H1 (cell line): ENCODE measurements at regions of chr1 and their contacts with region 1.

Region 1: GRCh38 chr1:25037174-25038074 is 107.3 kb upstream of the RUNX3 start:
- DNase-seq: peak in 1 of 2 experiments; percentile 82
- H3K4me3 ChIP-seq: no peak overlapping the region
- H3K27ac ChIP-seq: no peak overlapping the region
- H3K4me1 ChIP-seq: peaks cover 0 to 3% (median under 1%) of the 10 kb centered on the region in 4 experiments; a peak in 2 of 7 replicates
- H3K27me3 ChIP-seq: no peaks in the 10 kb centered on the region
- CTCF ChIP-seq: peak; percentile 82 to 85 (median 83)
- EP300 ChIP-seq: no peak
- POLR2A ChIP-seq: no peak
- RAD21 ChIP-seq: peak; percentile 46 to 66

Region 2: DNA sequence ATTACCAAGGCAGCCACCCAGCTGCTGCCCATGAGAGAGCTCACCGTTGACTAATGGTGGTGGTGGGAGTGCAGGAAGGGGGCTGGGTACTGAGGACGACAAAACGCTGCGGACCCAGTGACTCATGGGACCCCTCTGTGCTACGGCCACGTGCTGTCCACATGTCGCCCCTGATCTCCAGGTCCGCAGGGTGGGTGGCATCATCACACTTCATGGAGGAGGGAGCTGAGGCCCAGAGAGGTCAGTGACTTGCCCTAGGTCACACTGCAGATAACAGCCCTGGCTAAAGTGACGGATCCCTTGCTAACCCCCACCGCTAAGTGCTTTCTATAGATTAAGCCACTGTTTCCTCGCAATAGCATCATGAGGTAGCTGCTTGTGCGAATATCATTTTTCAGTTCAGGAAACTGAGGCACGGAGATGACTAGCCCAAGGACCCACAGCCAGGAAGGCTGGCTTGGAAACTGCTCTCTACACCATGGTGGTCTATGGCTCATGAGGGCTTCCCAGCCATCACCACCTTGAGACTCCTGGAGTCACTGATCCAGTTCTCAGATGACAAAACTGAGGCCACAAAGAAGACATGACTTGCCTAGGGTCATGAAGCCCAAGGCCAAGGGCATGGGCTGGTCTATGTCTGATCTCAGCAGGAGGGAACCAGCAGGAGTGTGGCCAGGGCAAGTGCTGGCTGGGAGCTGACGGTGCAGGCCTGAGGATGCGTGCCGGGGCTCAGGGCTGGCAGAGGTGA is 119.9 kb before region 1 on chr1:
- CTCF ChIA-PET with region 1: no interaction called
- POLR2A ChIA-PET with region 1: no interaction called
- DNase-seq: no peak
- H3K4me3 ChIP-seq: no peak overlapping the region
- H3K27ac ChIP-seq: no peak overlapping the region
- H3K4me1 ChIP-seq: peaks cover 0 to 8% (median 4%) of the 10 kb centered on the region in 4 experiments; a peak in 4 of 7 replicates
- H3K27me3 ChIP-seq: no peaks in the 10 kb centered on the region
- CTCF ChIP-seq: no peak
- EP300 ChIP-seq: no peak
- POLR2A ChIP-seq: no peak
- RAD21 ChIP-seq: no peak

Region 3: DNA sequence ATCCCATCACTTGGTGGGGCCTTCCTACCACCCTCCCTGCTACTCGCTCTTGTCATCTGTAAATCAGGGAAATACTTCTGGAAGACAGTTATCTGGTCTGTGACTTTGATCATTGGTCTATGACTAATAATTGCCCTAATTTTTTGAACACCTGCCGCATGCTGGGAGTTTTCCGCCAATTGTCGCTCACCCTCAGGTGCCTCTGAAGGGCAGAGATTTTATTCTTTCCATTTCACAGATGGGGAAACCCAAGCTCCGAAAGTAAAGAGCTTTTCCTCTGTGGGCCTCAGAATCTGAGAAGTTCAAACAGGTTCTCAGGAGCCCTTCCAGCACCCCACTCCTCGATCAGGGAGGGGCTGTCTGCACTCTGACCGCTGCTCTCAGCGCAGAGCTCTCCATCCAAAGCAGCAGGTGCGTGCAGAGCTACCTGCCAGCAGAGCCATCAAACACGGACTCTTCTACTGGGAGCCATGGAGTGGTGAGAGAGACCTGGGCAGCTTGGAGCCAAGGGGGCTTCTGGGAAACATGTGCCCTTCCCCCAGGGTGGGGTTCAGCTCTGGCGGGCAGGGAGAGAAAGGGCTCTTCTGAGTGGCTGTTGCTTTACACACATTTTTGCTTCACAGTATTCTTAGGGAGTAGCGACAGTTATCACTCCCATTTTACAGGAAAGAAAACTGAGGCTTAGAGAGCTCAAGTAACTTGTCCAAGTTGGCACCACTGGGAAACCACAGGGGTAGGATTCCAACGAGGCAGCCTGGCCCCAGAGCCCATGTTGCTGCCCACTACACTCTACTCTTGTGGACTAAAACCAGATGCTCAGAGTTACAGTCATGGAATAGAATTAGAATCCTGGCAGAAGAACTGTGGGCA is 101.6 kb before region 1 on chr1:
- CTCF ChIA-PET with region 1: interaction called, 36 read pairs
- POLR2A ChIA-PET with region 1: no interaction called
- DNase-seq: no peak
- H3K4me3 ChIP-seq: peak overlapping the region in 1 of 4 experiments; percentile 44; a peak in 1 of 8 replicates
- H3K27ac ChIP-seq: no peak overlapping the region
- H3K4me1 ChIP-seq: peaks cover 2 to 49% (median 24%) of the 10 kb centered on the region in 4 experiments
- H3K27me3 ChIP-seq: peaks cover 27 to 52% (median 50%) of the 10 kb centered on the region in 4 experiments
- CTCF ChIP-seq: no peak
- EP300 ChIP-seq: no peak
- POLR2A ChIP-seq: no peak
- RAD21 ChIP-seq: no peak

Region 4: DNA sequence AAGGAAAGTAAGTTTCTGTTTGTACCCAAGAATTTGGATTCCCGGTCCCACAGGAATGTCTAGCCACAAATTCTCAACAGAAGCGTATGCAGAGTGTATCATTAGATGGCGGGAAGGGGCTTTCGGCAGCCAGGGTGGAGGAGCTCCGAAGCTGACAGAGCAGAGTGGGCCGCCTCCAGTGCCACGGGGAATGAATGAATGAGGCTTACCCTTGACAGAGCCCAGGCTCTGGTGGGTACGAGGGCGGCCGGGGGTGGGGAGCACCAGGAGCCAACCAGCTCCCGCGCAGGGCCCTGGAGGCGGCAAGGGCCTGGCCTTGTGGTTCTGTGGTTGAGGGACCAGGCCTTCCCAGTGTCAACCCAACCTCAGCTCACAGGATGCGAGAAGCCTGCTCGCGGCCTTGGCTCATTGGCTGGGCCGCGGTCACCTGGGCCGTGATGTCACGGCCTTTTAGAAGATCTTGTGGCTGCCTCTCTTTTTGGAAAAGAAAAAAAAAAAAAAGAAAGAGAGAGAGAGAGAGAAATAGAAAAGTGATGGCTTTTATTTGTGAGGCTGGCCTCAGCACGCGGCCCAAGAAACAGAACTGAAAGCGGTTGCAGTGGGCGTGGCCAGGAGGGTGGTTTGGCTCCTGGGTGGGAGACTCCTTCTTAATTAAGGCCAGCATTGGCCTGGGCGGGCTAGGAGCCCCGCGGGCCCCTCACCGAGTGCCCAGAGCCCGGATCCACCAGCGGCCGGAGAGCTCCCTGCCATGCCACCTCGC is 72.4 kb before region 1 on chr1:
- CTCF ChIA-PET with region 1: interaction called, 11 read pairs
- POLR2A ChIA-PET with region 1: no interaction called
- DNase-seq: no peak
- H3K4me3 ChIP-seq: no peak overlapping the region
- H3K27ac ChIP-seq: no peak overlapping the region
- H3K4me1 ChIP-seq: peaks cover 0 to 5% (median under 1%) of the 10 kb centered on the region in 4 experiments; a peak in 3 of 7 replicates
- H3K27me3 ChIP-seq: no peaks in the 10 kb centered on the region
- CTCF ChIP-seq: no peak
- EP300 ChIP-seq: no peak
- POLR2A ChIP-seq: no peak
- RAD21 ChIP-seq: no peak

Region 5: DNA sequence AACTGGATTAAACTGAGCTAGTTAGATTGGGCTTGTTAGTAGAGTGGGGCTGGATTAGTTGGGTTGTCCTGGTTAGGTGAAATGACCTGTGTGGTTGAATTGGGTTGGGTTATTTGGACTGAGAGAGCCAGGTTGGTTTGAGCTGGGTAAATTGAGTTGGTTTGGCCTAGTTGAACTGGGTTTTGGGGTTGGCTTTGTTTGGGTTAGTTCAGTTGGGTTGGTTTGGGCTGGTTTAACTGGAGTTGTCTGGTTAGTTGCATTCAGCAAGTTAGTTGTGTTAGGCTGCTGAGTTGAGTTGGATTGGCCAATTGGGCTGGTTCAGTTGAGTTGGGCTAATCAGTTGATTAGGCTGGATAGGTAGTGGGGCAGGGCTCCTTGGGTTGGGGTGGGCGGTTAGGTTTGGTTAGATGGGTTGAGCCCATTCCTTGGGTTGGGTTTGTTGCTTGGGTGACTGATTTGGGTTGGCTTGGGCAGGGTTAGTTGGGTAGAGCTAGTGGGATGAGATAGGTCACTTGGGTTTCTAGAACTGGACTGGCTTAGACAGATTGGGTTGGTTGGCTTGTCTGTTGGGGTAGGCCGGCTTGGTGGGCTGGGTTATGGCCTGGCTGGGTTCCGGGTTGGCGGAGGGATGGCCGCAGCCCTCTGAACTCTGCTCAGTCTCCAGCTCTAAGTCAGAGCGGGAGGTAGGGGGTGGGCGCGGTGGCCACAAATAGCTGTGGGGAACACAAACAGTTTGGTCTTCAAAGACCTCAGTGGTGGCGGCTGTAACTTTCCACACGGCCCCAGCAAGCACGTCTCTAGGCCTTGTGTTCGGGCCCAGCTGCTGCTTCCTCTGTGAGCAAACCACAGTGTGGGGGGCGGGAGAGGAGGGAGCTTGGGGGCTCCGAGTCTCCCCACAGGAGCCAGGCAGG is 40.2 kb before region 1 on chr1:
- CTCF ChIA-PET with region 1: interaction called, 31 read pairs
- POLR2A ChIA-PET with region 1: no interaction called
- DNase-seq: no peak
- H3K4me3 ChIP-seq: no peak overlapping the region
- H3K27ac ChIP-seq: no peak overlapping the region
- H3K4me1 ChIP-seq: no peaks in the 10 kb centered on the region
- H3K27me3 ChIP-seq: no peaks in the 10 kb centered on the region
- CTCF ChIP-seq: no peak
- EP300 ChIP-seq: no peak
- POLR2A ChIP-seq: no peak
- RAD21 ChIP-seq: no peak

Region 6: DNA sequence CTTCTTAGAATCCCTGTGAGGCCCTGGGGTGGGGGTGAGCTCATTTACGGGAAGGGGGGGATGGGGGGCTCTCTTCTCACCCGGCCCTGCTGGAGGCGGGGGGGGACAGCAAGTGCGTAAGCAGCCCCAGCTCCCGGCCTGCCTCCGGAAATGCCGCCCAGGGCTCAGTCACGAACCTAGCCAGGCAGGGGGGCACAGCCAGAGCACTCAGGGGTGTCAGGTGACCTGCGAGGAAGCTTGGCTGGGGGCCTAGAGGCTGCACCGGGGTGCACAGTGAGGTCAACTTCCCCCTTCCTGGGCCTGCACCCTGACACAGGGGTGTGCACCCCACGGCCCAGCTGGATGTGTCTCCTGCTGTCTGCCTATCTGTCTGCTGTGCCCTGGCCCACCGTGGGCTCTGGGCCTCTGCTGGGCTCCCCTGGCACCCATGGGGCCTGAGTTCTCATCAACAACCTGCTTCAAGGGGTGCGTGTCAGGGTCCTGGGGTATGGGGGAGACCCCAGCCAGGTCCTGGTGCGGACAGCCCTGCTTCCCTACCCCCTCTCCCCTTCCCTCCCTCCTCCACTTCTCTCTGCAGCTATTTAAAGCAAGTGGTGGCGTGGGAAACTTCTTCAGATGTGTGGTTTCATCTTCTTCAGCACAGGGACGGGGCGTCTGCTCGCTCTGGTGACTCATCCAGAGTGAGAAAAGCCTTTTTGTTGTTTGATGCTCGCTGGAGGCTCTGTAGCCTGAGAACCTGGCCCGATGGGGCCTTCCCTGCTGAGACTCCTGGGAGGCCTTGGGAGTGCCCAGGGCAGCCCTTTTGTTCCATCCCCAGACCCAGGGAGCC is 14.8 kb before region 1 on chr1:
- CTCF ChIA-PET with region 1: interaction called, 43 read pairs
- POLR2A ChIA-PET with region 1: interaction called, 3 read pairs
- DNase-seq: peak in 1 of 2 experiments; percentile 23
- H3K4me3 ChIP-seq: no peak overlapping the region
- H3K27ac ChIP-seq: no peak overlapping the region
- H3K4me1 ChIP-seq: peaks cover 0 to 23% (median 15%) of the 10 kb centered on the region in 4 experiments; a peak in 6 of 7 replicates
- H3K27me3 ChIP-seq: no peaks in the 10 kb centered on the region; a peak in 1 of 7 replicates
- CTCF ChIP-seq: no peak
- EP300 ChIP-seq: no peak
- POLR2A ChIP-seq: no peak
- RAD21 ChIP-seq: no peak

Region 7: GRCh38 chr1:25099343-25099951 is 62.0 kb after region 1 on chr1:
- CTCF ChIA-PET with region 1: interaction called, 28 read pairs
- POLR2A ChIA-PET with region 1: no interaction called
- DNase-seq: no peak
- H3K4me3 ChIP-seq: no peak overlapping the region
- H3K27ac ChIP-seq: no peak overlapping the region
- H3K4me1 ChIP-seq: no peaks in the 10 kb centered on the region
- H3K27me3 ChIP-seq: no peaks in the 10 kb centered on the region; a peak in 1 of 7 replicates
- CTCF ChIP-seq: no peak
- EP300 ChIP-seq: no peak
- POLR2A ChIP-seq: no peak
- RAD21 ChIP-seq: no peak